ENCODE measurements at regions of chr14 and their contacts with region 1.

Region 1: GRCh38 chr14:89040460-89041259 is 216.2 kb downstream of the TTC8 start:
- DNase-seq: peak; percentile 88 to 94
- ATAC-seq: peak; percentile 96 to 97
- H3K4me3 ChIP-seq: peak overlapping the region; percentile 38 to 72 (median 50)
- H3K27ac ChIP-seq: peak overlapping the region; percentile 77 to 89 (median 84)
- H3K4me1 ChIP-seq: peaks cover 9 to 21% of the 10 kb centered on the region in 2 donors
- H3K27me3 ChIP-seq: no peaks in the 10 kb centered on the region
- CTCF ChIP-seq: peak; percentile 91 to 97 (median 96)
- POLR2A ChIP-seq: no peak

Region 2: GRCh38 chr14:88919502-88919901 is 121.2 kb before region 1 on chr14:
- in situ Hi-C with region 1: no loop called
- intact Hi-C with region 1: no loop called
- DNase-seq: no peak
- ATAC-seq: no peak
- H3K4me3 ChIP-seq: no peak overlapping the region
- H3K27ac ChIP-seq: no peak overlapping the region
- H3K4me1 ChIP-seq: no peaks in the 10 kb centered on the region
- H3K27me3 ChIP-seq: no peaks in the 10 kb centered on the region
- CTCF ChIP-seq: no peak
- POLR2A ChIP-seq: no peak

Region 3: DNA sequence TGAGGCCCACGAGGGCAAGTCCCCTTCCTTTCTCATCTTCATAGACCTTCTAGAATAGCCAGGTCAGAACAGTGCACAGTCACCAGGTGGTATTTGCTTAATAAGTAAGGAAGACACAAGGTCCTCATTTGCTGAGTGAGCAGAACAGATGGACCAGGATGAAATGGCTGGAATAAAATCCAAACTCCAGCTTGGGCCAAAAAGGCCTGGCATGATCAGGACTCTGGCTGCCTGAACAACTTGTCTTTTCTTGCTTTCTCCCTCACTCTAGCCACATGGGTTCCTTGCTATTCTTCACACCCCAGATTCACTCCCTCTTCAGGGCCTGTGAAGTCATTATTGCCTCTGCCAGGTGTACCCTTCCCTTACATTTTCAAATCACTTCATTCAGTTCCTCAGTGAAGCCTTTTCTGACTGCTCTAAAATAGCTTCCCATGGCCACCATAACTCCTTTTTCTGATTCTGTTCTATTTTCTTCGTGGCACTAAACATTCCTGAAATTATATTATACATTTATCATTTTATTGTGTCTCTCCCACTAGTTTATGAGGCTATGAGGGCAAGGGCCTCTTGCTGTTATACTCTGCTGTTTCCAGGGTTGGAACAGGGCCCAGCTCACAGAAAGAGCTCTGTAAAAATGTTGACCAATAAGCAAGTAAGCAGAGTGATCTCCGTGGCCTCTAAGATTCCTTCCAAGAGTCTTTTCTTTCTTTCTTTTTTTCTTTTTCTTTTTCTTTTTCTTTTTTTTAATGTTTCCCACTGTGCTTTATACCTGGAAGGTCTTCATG is 65.4 kb before region 1 on chr14:
- in situ Hi-C with region 1: no loop called
- intact Hi-C with region 1: no loop called
- DNase-seq: no peak
- ATAC-seq: no peak
- H3K4me3 ChIP-seq: no peak overlapping the region
- H3K27ac ChIP-seq: no peak overlapping the region
- H3K4me1 ChIP-seq: no peaks in the 10 kb centered on the region
- H3K27me3 ChIP-seq: peaks cover 3 to 10% (median 6%) of the 10 kb centered on the region in 3 donors
- CTCF ChIP-seq: no peak
- POLR2A ChIP-seq: no peak

Region 4: DNA sequence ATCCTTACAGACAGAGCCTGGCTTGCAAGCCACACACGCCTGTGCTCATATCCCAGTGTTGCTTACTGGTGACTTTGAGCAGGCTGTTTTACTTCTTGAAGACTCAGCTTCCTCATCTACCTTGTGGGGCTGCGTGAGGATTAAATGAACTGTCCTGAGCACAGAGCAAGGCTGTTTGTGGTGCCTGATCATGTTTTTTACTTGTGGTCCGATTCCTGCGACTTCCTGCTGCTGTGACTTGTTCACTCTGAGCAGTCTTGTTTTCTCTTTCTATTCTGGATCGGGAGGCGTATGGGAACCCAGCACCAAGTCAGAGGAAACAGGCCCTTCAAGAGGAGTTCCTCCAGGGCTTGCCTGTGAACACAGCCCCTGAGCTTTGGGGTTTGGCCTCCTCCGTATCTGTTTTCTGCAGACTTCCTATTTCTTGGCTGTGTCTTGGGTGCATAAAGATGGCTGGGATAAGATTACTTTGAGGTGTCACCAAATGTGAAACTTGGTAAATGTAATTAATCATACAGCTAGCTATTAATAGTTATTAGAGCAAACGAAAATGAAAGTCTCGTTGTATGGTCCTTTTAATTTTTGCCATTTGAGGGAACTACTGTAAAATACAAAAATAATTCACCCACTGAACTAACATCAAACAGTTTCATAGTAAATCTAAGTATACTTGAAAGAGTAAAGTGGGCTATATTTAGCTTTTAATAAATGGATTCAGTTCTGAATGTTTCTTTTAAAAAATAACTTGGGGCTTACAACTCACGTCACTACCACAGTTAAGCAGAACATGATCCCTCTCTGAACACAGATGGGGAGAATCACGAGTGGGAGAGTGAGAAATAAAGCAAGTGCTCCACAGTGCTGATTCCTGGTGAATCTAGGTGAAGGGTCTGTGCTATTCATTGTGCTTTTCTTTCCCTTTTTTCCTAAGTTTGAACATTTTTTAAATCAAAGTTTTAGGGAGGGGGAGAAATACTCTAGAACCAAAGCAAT is 124.8 kb after region 1 on chr14:
- in situ Hi-C with region 1: no loop called
- intact Hi-C with region 1: loop called (anchors 5 kb)
- DNase-seq: no peak
- ATAC-seq: peak; percentile 61 to 67
- H3K4me3 ChIP-seq: peak overlapping the region; percentile 7 to 42 (median 17)
- H3K27ac ChIP-seq: peak overlapping the region; percentile 47 to 69 (median 60)
- H3K4me1 ChIP-seq: peaks cover 41 to 45% of the 10 kb centered on the region in 2 donors
- H3K27me3 ChIP-seq: no peaks in the 10 kb centered on the region
- CTCF ChIP-seq: no peak
- POLR2A ChIP-seq: no peak

Region 5: DNA sequence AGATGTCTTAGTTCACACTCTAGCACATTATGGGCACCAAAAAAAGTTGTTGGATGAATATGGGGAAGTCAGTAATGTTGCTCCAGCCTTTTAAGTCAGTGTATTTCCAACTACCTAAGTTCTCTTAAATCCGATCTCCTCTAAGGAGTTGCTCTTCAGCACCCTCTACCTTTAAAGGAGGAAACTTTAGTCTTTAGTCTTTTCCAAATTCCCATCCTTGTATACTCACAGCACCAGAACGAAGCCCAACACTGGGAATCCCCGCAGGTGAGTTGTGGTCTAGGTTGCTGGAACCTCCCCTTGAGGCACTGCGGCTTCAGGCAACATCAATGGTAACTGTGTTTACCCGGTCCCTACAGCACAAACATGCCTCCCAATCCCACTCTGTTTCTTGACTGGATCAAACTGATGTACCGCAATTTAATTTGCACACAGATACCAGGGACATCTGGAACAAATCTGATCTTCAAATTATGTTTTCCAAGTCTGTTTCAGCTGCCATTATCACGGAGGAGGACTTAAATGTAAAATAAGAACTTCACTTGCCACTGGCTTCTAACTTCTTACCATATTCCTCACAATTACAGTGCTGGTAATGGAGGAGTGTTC is 197.4 kb after region 1 on chr14:
- in situ Hi-C with region 1: loop called in 1 of 4 experiments (anchors 25 kb)
- intact Hi-C with region 1: no loop called
- DNase-seq: no peak
- ATAC-seq: peak in 1 of 2 donors; percentile 55
- H3K4me3 ChIP-seq: no peak overlapping the region
- H3K27ac ChIP-seq: no peak overlapping the region
- H3K4me1 ChIP-seq: peaks cover 12 to 32% of the 10 kb centered on the region in 2 donors
- H3K27me3 ChIP-seq: no peaks in the 10 kb centered on the region
- CTCF ChIP-seq: peak; percentile 13 to 53 (median 52)
- POLR2A ChIP-seq: no peak

Region 6: GRCh38 chr14:89618811-89619551 is 578.3 kb after region 1 on chr14:
- in situ Hi-C with region 1: no loop called
- intact Hi-C with region 1: loop called (anchors 2 kb)
- DNase-seq: peak; percentile 53 to 74
- ATAC-seq: peak; percentile 72 to 77
- H3K4me3 ChIP-seq: peak overlapping the region; percentile 65 to 73 (median 72)
- H3K27ac ChIP-seq: peak overlapping the region; percentile 78 to 87 (median 85)
- H3K4me1 ChIP-seq: peaks cover 36 to 39% of the 10 kb centered on the region in 2 donors
- H3K27me3 ChIP-seq: no peaks in the 10 kb centered on the region
- CTCF ChIP-seq: no peak
- POLR2A ChIP-seq: peak; percentile 48 to 57

Region 7: GRCh38 chr14:89792489-89793366 is 752.1 kb after region 1 on chr14:
- in situ Hi-C with region 1: no loop called
- intact Hi-C with region 1: loop called (anchors 1 kb)
- DNase-seq: peak; percentile 87 to 88
- ATAC-seq: peak; percentile 98 to 99
- H3K4me3 ChIP-seq: peak overlapping the region in 1 of 4 donors; percentile 29
- H3K27ac ChIP-seq: peak overlapping the region; percentile 81 to 91 (median 89)
- H3K4me1 ChIP-seq: peaks cover 18 to 26% of the 10 kb centered on the region in 2 donors
- H3K27me3 ChIP-seq: no peaks in the 10 kb centered on the region
- CTCF ChIP-seq: no peak
- POLR2A ChIP-seq: no peak